Right lobe of liver (tissue), 6 donors: ENCODE measurements at regions of chr7 and their contacts with region 1.

Region 1: DNA sequence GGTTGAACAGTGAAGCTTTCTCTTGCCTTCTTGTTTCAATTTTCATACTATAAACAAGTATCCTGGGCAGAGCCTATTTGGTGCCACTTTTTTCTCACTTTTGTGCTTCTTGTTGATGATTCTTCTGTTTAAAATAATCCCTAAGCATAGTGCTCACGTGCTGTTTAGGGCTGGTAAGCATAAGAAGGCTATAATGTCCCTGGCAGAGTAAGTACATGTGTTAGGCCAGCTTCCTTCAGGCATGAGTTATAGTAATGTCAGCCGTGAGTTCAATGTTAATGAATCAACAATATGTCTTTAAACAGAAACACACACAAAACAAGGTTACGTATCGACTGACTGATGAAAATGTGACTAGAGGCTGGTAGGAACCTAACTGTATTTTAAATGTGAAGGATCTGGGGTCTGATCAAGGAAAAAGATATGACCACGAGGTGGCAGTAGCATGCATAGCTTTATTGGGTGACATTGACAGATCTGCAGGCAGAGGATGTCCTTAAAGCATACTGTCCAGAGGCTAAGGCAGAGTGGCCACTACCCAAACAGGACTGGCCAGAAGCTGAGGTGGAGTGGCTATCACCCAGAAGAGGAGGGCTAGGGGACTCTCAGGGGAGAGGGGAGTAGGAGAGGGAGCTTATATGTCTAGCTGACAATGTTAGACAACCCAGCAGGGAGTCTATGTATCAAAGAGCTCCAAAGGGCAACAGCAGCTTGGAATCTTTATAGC is 113.7 kb downstream of the BRAF start:
- DNase-seq: peak in 1 of 3 donors; percentile 64
- ATAC-seq: peak; percentile 99 to 100 (median 99)
- H3K4me3 ChIP-seq: no peak overlapping the region
- H3K27ac ChIP-seq: no peak overlapping the region
- H3K4me1 ChIP-seq: no peaks in the 10 kb centered on the region
- H3K27me3 ChIP-seq: no peaks in the 10 kb centered on the region
- CTCF ChIP-seq: peak; percentile 77 to 79 (median 78)
- POLR2A ChIP-seq: no peak

Region 2: DNA sequence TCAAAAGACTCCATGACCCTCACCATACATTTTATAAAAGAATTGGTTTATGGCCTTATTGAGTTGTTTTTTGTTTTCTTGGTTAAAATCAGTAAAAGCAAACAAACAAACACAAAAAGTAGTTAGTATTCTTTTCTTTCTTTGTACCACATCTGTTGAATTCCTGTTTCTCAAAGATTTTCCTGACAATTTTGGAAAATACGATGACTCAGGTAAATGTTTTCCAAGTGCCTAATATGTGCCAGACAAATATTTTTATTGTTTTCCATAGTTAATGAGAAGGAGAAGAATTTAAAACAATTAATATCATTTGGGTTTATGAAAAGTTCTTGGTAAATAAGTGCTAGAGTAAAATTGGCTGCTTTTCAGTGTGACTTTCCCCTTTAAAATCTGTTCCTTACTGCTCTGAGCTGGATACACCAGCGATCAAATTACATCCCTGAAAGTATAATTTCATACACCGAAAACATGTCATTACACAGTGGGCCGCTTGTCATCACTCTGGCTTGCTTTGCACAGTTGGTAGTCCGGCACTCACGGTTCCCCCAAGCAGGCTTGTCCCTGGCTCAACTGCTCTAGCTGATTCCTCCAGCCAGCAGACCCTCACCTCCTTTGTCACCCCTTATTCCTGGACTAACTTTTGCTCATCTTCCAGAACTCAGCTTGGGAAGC is 901.5 kb before region 1 on chr7:
- intact Hi-C with region 1: no loop called
- DNase-seq: no peak
- ATAC-seq: no peak
- H3K4me3 ChIP-seq: no peak overlapping the region
- H3K27ac ChIP-seq: no peak overlapping the region
- H3K4me1 ChIP-seq: no peaks in the 10 kb centered on the region
- H3K27me3 ChIP-seq: no peaks in the 10 kb centered on the region
- CTCF ChIP-seq: no peak
- POLR2A ChIP-seq: no peak

Region 3: GRCh38 chr7:140914083-140914482 is 103.1 kb after region 1 on chr7:
- intact Hi-C with region 1: no loop called
- DNase-seq: no peak
- ATAC-seq: no peak
- H3K4me3 ChIP-seq: no peak overlapping the region
- H3K27ac ChIP-seq: no peak overlapping the region
- H3K4me1 ChIP-seq: peaks cover 0 to 13% (median 0%) of the 10 kb centered on the region in 4 donors
- H3K27me3 ChIP-seq: no peaks in the 10 kb centered on the region
- CTCF ChIP-seq: no peak
- POLR2A ChIP-seq: no peak

Region 4: GRCh38 chr7:141014524-141015395 is 203.8 kb after region 1 on chr7 and contains the start of gene MRPS33:
- intact Hi-C with region 1: loop called (anchors 10 kb)
- DNase-seq: peak; percentile 95 to 98 (median 97)
- ATAC-seq: peak; percentile 99 to 100 (median 99)
- H3K4me3 ChIP-seq: peak within 1 kb of the TSS; percentile 63 to 79 (median 69)
- H3K27ac ChIP-seq: peak within 1 kb of the TSS; percentile 76 to 85 (median 81)
- H3K4me1 ChIP-seq: peaks cover 0 to 19% (median 5%) of the 10 kb centered on the region in 4 donors
- H3K27me3 ChIP-seq: no peaks in the 10 kb centered on the region
- CTCF ChIP-seq: peak in 3 of 4 donors; percentile 44 to 68 (median 52)
- POLR2A ChIP-seq: peak; percentile 82
- total RNA-seq, gene MRPS33: 26.0 to 44.4 (median 31.1) TPM

Region 5: GRCh38 chr7:141460781-141461715 is 650.1 kb after region 1 on chr7:
- intact Hi-C with region 1: no loop called
- DNase-seq: no peak
- ATAC-seq: no peak
- H3K4me3 ChIP-seq: no peak overlapping the region
- H3K27ac ChIP-seq: peak overlapping the region in 2 of 3 donors; percentile 61 to 77
- H3K4me1 ChIP-seq: peaks cover 0 to 21% (median 0%) of the 10 kb centered on the region in 4 donors
- H3K27me3 ChIP-seq: no peaks in the 10 kb centered on the region
- CTCF ChIP-seq: no peak
- POLR2A ChIP-seq: no peak